Left cardiac atrium (tissue), 4 donors: ENCODE measurements at regions of chr16 and their contacts with region 1.

Region 1: GRCh38 chr16:8905168-8905762 is 23.1 kb downstream of the LITAFD start:
- DNase-seq: no peak
- ATAC-seq: no peak

Region 2: DNA sequence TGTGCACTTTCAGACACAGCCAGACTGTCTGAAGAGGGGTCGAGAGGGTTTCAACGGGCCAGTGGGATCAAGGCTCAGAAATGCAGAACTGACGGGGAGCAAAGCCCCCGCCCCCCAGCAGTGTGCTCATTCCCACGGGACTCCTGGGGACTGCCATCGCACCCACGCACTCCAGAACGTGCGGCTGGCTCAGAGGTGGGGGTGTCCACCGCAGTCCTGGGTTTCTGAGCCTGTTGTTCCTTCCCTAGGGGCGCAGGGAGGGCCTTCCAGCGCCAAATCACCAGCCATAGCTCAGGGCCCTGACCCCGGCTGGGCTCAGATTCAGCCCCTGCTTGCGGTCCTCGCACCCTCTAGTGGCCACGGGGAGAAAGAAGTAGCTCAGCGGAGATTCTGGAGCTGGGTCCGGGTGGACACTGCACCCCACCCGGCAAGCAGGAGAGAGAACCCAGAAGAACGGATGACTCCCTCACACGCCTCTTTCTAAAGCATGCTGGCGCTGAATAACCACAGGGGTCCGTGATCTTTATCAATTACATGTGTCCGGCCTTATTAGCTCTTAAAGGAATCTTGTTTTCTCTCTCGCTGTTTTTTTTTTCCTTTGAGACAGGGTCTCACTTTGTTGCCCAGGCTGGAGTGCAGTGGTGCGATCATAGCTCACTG is 103.5 kb after region 1 on chr16:
- intact Hi-C with region 1: loop called in 1 of 2 experiments (anchors 10 kb)
- DNase-seq: peak; percentile 79
- ATAC-seq: peak; percentile 94 to 96